Adrenal gland (tissue), 19 donors: ENCODE measurements at regions of chr16 and their contacts with region 1.

Region 1: GRCh38 chr16:84169765-84170310 is 17.0 kb downstream of the TAF1C start:
- DNase-seq: no peak
- H3K4me3 ChIP-seq: no peak overlapping the region
- H3K27ac ChIP-seq: no peak overlapping the region
- H3K4me1 ChIP-seq: no peaks in the 10 kb centered on the region
- H3K27me3 ChIP-seq: no peaks in the 10 kb centered on the region
- CTCF ChIP-seq: no peak
- POLR2A ChIP-seq: no peak

Region 2: DNA sequence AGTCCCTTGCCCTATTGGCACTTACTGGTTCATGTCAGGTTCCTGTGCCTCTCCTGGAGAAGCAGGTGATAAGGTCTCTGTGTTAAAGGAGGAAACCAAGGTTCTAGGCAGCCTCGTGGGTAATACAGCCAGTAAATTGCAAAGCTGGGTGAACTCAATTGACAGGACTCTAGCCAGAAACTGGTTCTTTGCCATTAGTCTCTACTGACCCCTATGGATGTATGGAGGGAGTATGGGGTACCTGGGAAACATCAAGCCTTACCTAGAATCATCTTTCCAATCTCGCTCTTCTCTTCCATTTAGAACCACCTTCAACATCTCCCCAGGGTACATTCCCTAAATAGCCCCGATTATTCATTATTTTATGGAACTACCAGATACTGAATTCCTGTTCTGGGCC is 1373.8 kb before region 1 on chr16:
- intact Hi-C with region 1: no loop called
- DNase-seq: no peak
- H3K4me3 ChIP-seq: no peak overlapping the region
- H3K27ac ChIP-seq: no peak overlapping the region
- H3K4me1 ChIP-seq: no peaks in the 10 kb centered on the region
- H3K27me3 ChIP-seq: no peaks in the 10 kb centered on the region
- CTCF ChIP-seq: no peak
- POLR2A ChIP-seq: no peak

Region 3: DNA sequence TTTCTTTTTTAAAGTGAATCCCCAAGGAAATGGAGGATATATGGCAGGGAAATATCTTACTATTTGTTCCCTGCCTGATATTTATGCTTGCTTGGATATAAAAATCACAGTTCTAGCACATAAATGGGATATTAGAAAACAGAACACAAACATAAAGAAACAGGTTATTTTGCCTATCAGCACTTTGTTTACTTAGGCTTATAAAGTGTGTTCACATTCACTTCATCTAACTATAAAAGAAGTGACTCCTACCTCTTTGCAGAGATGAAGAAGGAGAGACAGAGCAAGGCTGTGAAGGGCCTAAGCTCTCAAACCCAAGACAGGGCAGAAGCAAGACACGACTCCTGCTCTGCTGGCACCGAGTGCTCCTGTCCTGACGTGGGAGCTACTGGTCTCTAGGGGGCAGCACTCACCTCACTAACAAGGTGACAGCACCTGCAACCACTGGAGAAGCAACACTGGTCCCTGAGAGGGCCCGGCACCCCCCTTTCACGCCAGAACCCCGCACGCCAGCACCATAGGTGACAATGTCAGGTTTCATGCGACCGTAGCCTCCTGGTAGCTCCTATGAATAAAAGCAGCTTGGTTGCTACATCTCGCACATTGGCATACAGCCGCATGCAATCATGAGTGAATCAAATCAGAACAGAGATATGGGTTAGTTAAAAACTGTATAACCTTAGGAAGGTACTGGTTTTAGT is 85.1 kb before region 1 on chr16:
- intact Hi-C with region 1: loop called in 1 of 2 experiments (anchors 5 kb)
- DNase-seq: peak; percentile 55 to 84 (median 68)
- H3K4me3 ChIP-seq: no peak overlapping the region
- H3K27ac ChIP-seq: no peak overlapping the region
- H3K4me1 ChIP-seq: peaks cover 18 to 38% of the 10 kb centered on the region in 2 donors
- H3K27me3 ChIP-seq: no peaks in the 10 kb centered on the region
- CTCF ChIP-seq: peak; percentile 37 to 70 (median 58)
- POLR2A ChIP-seq: no peak